Aorta (tissue), 5 donors: ENCODE measurements at regions of chr16 and their contacts with region 1.

Region 1: GRCh38 chr16:19173649-19174383 is 5.8 kb downstream of the SYT17 start:
- DNase-seq: no peak
- ATAC-seq: no peak
- H3K4me3 ChIP-seq: no peak overlapping the region
- H3K27ac ChIP-seq: no peak overlapping the region
- H3K4me1 ChIP-seq: no peaks in the 10 kb centered on the region
- H3K27me3 ChIP-seq: no peaks in the 10 kb centered on the region

Region 2: DNA sequence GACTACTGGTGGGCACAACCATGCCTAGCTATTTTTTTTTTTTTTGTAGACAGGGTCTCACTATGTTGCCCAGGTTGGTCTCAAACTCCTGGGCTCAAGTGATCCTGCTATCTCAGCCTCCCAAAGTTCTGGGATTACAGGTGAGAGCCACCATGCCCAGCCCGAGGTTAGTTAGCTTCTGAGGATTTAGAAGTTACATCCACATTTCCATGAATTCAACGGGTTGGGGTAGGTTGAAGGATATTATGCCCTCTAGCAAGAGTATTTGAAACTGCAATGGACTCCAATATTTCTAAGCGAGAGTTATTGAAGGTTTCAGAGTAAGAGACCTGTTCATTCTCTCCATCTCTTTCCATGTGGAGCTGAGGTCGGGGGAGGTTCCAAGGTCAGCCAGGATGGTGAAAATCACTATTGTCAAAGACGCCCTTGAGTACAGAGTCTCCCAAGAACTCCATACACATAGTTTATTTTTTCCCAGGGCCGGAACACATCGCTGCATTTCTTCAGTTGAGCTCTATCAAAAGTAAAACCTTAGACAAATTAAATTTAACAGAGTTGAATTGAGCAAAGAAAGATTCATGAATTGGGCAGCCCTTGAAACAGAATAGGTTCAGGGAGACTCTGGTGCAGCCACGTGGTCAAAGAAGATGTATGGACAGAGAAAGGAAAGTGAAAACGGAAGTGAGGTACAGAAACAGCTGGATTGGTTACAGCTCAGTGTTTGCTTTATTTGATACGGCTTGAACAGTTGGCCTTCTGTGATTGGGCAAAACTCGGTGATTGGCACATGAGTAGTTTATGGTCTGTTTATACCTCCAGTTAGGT is 79.1 kb before region 1 on chr16:
- intact Hi-C with region 1: loop called (anchors 5 kb)
- DNase-seq: no peak
- ATAC-seq: no peak
- H3K4me3 ChIP-seq: no peak overlapping the region
- H3K27ac ChIP-seq: no peak overlapping the region
- H3K4me1 ChIP-seq: no peaks in the 10 kb centered on the region
- H3K27me3 ChIP-seq: no peaks in the 10 kb centered on the region

Region 3: GRCh38 chr16:19236561-19237209 is 62.9 kb after region 1 on chr16:
- intact Hi-C with region 1: no loop called
- DNase-seq: no peak
- ATAC-seq: no peak
- H3K4me3 ChIP-seq: no peak overlapping the region
- H3K27ac ChIP-seq: no peak overlapping the region
- H3K4me1 ChIP-seq: no peaks in the 10 kb centered on the region
- H3K27me3 ChIP-seq: no peaks in the 10 kb centered on the region